Heart left ventricle (tissue), 16 donors: ENCODE measurements at regions of chr9 and their contacts with region 1.

Region 1: GRCh38 chr9:1400983-1401382 is 350.8 kb downstream of the DMRT2 start:
- DNase-seq: no peak
- ATAC-seq: no peak
- H3K4me3 ChIP-seq: no peak overlapping the region
- H3K27ac ChIP-seq: no peak overlapping the region
- H3K4me1 ChIP-seq: no peaks in the 10 kb centered on the region
- H3K27me3 ChIP-seq: no peaks in the 10 kb centered on the region
- CTCF ChIP-seq: no peak
- POLR2A ChIP-seq: no peak

Region 2: DNA sequence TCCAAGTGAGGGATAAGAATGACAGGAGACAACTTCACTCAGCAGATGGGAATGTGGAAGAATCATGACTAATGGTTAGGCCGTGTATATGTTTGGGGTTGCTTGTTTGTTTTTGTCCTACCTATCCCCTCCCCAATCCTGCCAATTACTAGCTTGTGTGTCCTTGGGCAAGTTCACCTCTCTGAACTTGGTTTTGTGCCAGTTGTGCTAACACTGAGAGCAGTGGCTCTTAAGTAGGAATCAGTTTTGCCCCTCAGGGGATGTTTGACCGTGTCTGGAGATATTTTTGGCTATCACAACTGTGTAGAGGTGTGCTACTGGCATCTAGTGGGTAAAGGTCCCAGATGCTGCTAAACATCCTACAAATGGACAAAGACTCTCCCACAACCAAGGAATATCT is 63.8 kb before region 1 on chr9:
- intact Hi-C with region 1: loop called in 1 of 10 experiments (anchors 10 kb)
- DNase-seq: no peak
- ATAC-seq: peak in 1 of 4 donors; percentile 13
- H3K4me3 ChIP-seq: no peak overlapping the region
- H3K27ac ChIP-seq: no peak overlapping the region
- H3K4me1 ChIP-seq: no peaks in the 10 kb centered on the region
- H3K27me3 ChIP-seq: no peaks in the 10 kb centered on the region
- CTCF ChIP-seq: no peak
- POLR2A ChIP-seq: no peak

Region 3: GRCh38 chr9:1591310-1591709 is 190.3 kb after region 1 on chr9:
- intact Hi-C with region 1: no loop called
- DNase-seq: no peak
- ATAC-seq: no peak
- H3K4me3 ChIP-seq: no peak overlapping the region
- H3K27ac ChIP-seq: no peak overlapping the region
- H3K4me1 ChIP-seq: no peaks in the 10 kb centered on the region
- H3K27me3 ChIP-seq: no peaks in the 10 kb centered on the region
- CTCF ChIP-seq: no peak
- POLR2A ChIP-seq: no peak